ENCODE measurements at regions of chrX and their contacts with region 1.

Region 1: GRCh38 chrX:40792433-40792832 is 57.1 kb upstream of the MED14 start:
- DNase-seq: no peak
- H3K4me3 Mint-ChIP-seq: no peak overlapping the region
- H3K27ac Mint-ChIP-seq: no peak overlapping the region
- H3K4me1 Mint-ChIP-seq: no peaks in the 10 kb centered on the region
- H3K27me3 Mint-ChIP-seq: no peaks in the 10 kb centered on the region

Region 2: GRCh38 chrX:40539214-40540142 is 253.0 kb before region 1 on chrX:
- CTCF ChIA-PET with region 1: interaction called, 29 read pairs
- POLR2A ChIA-PET with region 1: no interaction called
- intact Hi-C with region 1: loop called (anchors 1 kb)
- DNase-seq: peak; percentile 85
- H3K4me3 Mint-ChIP-seq: no peak overlapping the region
- H3K27ac Mint-ChIP-seq: peak overlapping the region; percentile 36
- H3K4me1 Mint-ChIP-seq: peaks cover 22% of the 10 kb centered on the region
- H3K27me3 Mint-ChIP-seq: peaks cover 2% of the 10 kb centered on the region

Region 3: GRCh38 chrX:40573763-40574162 is 218.7 kb before region 1 on chrX:
- CTCF ChIA-PET with region 1: interaction called, 3 read pairs
- POLR2A ChIA-PET with region 1: no interaction called
- intact Hi-C with region 1: loop called (anchors 1 kb)
- DNase-seq: peak; percentile 59
- H3K4me3 Mint-ChIP-seq: no peak overlapping the region
- H3K27ac Mint-ChIP-seq: no peak overlapping the region
- H3K4me1 Mint-ChIP-seq: peaks cover 16% of the 10 kb centered on the region
- H3K27me3 Mint-ChIP-seq: no peaks in the 10 kb centered on the region

Region 4: GRCh38 chrX:40647307-40648197 is 144.9 kb before region 1 on chrX and contains the start of gene CXorf38:
- CTCF ChIA-PET with region 1: interaction called, 79 read pairs
- POLR2A ChIA-PET with region 1: interaction called, 3 read pairs
- intact Hi-C with region 1: loop called (anchors 1 kb)
- DNase-seq: peak; percentile 94
- H3K4me3 Mint-ChIP-seq: peak within 1 kb of the TSS; percentile 96
- H3K27ac Mint-ChIP-seq: peak within 1 kb of the TSS; percentile 94
- H3K4me1 Mint-ChIP-seq: peaks cover 19% of the 10 kb centered on the region
- H3K27me3 Mint-ChIP-seq: no peaks in the 10 kb centered on the region
- total RNA-seq, gene CXorf38: 20.2 to 20.5 TPM

Region 5: GRCh38 chrX:40663880-40664633 is 128.4 kb before region 1 on chrX:
- CTCF ChIA-PET with region 1: interaction called, 10 read pairs
- POLR2A ChIA-PET with region 1: no interaction called
- intact Hi-C with region 1: no loop called
- DNase-seq: no peak
- H3K4me3 Mint-ChIP-seq: no peak overlapping the region
- H3K27ac Mint-ChIP-seq: peak overlapping the region; percentile 45
- H3K4me1 Mint-ChIP-seq: no peaks in the 10 kb centered on the region
- H3K27me3 Mint-ChIP-seq: no peaks in the 10 kb centered on the region

Region 6: DNA sequence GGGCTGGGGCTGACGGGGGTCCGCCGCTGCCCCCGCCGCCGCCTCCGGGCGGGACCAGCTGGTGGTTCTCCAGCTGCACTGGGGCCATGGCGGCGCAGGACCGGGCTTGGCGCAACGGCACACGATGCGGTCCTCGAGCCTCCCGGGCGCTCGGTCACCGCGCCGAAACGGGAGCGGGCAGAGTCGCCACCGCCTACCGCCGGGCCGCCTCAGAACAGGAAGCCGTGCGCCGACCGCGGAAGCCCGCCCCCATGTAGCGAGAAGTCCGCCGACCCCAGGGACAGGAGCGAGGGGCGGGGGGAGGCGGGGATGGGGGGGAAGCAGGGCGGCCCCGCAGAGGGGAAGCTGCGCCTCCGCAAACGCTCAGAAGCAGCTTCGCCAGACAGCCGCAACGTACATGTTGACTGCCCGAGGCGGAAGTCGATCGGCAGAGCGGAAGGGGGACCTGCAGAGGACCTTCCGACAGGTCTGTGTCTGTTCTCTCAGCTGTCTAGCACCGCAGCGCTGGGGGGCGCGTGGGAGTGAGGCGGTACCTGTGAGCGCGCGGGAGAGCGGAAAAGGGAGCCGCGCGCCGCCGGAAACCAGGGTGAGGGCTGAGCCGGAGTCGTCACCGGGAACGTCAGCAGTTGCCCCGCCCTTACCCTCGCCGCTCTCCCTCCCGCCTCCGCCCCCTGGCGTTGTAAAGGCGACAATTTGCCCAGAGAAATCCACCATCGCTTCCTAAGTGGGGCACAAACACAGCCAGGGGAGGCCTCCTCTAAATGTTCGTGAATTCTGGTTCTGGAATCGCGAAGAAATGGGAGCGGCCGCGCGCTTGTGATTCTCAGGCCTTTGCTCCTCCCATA is 56.9 kb before region 1 on chrX and contains the start of gene MED14:
- CTCF ChIA-PET with region 1: interaction called, 6 read pairs
- POLR2A ChIA-PET with region 1: no interaction called
- intact Hi-C with region 1: loop called (anchors 10 kb)
- DNase-seq: peak; percentile 93
- H3K4me3 Mint-ChIP-seq: peak within 1 kb of the TSS; percentile 84
- H3K27ac Mint-ChIP-seq: peak within 1 kb of the TSS; percentile 92
- H3K4me1 Mint-ChIP-seq: peaks cover 44% of the 10 kb centered on the region
- H3K27me3 Mint-ChIP-seq: no peaks in the 10 kb centered on the region
- total RNA-seq, gene MED14: 46.4 to 49.4 TPM

Region 7: GRCh38 chrX:41084044-41084892 is 291.8 kb after region 1 on chrX:
- CTCF ChIA-PET with region 1: no interaction called
- POLR2A ChIA-PET with region 1: no interaction called
- intact Hi-C with region 1: no loop called
- DNase-seq: peak; percentile 96
- H3K4me3 Mint-ChIP-seq: peak overlapping the region; percentile 80
- H3K27ac Mint-ChIP-seq: peak overlapping the region; percentile 100
- H3K4me1 Mint-ChIP-seq: peaks cover 14% of the 10 kb centered on the region
- H3K27me3 Mint-ChIP-seq: no peaks in the 10 kb centered on the region

Measured in activated CD4-positive, alpha-beta memory T cell treated with anti-CD3 and anti-CD28 coated beads for 36 hours (primary cell).